ENCODE measurements at regions of chr19 and their contacts with region 1.

Region 1: DNA sequence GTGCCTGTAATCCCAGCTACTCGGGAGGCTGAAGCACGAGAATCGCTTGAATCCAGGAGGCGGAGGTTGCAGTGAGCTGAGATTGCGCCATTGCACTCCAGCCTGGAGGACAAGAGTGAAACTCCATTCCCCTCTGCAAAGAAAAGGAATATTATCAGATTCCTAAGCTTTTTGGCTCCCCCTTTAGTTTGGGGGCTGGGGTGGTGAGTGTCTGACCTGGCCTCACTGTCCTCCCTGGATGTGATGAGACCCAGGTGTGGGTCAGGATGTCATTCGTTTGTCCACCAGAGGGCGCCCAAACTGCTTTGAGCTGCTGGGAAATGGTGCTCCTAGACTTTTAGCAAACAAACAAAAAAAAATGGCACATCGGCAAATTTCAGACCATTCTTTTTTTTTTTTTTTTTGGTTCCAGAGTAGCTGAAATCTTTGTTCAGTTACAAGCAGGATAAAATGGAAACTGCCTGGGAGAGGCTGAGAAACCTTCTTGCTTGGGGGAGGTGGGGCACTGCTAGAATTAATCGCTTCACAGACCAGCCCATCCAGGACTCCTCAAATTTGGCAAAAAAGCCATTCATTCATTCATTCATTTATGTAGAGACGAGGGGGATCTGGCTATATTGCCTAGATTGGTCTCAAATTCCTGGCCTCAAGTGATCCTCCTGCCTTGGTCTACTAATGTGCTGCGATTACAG is 29.4 kb downstream of the SPC24 start:
- DNase-seq: peak; percentile 86
- ATAC-seq: peak; percentile 63
- H3K4me3 Mint-ChIP-seq: no peak overlapping the region
- H3K27ac Mint-ChIP-seq: no peak overlapping the region
- H3K4me1 Mint-ChIP-seq: peaks cover 2% of the 10 kb centered on the region
- H3K27me3 Mint-ChIP-seq: no peaks in the 10 kb centered on the region
- CTCF ChIP-seq: peak; percentile 87

Region 2: DNA sequence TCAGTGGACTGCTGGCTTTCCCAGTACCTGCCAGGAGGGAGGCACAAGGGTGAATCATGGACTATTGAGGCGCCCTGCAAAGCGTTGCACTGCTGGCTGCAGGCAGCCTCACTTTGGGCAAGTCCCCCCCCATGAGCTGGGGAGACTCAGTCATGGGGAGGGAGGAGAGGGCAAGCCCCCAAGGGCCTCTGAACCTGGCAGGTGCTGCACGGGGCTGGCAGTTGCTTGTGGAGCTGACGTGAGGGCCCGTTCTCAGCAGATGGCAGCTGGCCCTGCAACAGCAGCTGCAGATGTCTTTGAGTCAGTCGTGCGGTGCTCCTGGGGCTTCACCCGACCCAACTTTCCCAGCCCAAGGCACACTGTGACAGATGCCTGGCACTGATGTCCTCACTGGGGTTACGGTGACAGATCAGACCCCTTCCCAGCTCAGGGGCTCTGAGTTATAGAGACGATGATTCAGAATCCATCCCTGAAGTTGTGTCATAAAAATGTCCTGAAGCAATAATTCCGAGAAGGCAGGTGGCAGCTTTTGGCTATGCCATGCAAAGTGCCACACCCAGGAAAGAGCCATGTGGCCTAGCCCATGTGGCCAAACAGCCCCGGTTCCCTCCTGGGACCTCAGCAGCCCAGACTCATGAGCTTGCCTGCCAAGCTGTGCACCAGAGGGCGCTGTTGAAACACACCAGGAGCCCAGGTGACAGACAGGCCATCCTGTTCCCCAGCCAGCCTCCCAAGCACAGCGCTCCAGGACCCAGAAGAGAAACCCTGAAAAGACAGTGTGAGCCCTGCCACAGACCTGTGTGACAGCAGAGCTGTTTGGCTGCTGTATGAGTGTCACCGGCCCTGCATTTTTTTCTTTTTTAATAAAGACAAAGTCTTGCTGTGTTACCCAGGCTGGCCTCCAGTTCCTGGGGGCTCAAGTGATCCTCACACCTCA is 90.4 kb before region 1 on chr19:
- CTCF ChIA-PET with region 1: interaction called, 14 read pairs
- POLR2A ChIA-PET with region 1: no interaction called
- intact Hi-C with region 1: no loop called
- DNase-seq: peak; percentile 92
- ATAC-seq: peak; percentile 97
- H3K4me3 Mint-ChIP-seq: no peak overlapping the region
- H3K27ac Mint-ChIP-seq: peak overlapping the region; percentile 10
- H3K4me1 Mint-ChIP-seq: peaks cover 5% of the 10 kb centered on the region
- H3K27me3 Mint-ChIP-seq: no peaks in the 10 kb centered on the region
- CTCF ChIP-seq: peak; percentile 85

Region 3: DNA sequence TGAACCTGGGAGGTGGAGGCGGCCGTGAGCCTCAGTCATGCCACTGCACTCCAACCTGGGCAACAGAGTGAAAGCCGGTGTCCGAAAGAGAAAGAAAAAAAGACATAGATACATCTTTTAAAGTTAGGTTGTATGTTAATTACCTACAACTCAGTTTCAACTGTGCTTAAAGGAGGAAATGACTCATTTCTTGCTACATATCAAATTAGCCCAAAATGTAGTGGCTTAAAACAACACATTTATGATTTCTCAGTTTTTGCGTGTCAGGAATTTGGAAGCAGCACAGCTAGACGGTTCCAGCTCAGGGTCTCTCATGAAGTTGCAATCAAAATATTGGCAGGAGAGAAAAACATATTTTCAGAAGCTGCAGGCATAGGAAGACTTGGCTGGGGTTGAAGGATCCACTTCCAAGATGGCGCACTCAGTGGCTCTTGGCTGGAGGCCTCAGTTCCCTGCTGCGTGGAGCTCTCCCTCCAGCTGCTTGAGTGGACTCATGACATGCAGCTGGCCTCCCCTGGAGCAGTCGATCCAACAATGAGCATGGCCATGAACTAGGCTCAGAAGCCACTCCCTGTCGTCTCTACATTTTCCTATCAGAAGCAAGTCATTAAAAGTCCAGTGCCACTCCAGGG is 29.8 kb before region 1 on chr19:
- CTCF ChIA-PET with region 1: interaction called, 10 read pairs
- POLR2A ChIA-PET with region 1: interaction called, 4 read pairs
- intact Hi-C with region 1: no loop called
- DNase-seq: peak; percentile 57
- ATAC-seq: peak; percentile 55
- H3K4me3 Mint-ChIP-seq: peak overlapping the region; percentile 63
- H3K27ac Mint-ChIP-seq: peak overlapping the region; percentile 94
- H3K4me1 Mint-ChIP-seq: peaks cover 54% of the 10 kb centered on the region
- H3K27me3 Mint-ChIP-seq: no peaks in the 10 kb centered on the region
- CTCF ChIP-seq: no peak

Region 4: DNA sequence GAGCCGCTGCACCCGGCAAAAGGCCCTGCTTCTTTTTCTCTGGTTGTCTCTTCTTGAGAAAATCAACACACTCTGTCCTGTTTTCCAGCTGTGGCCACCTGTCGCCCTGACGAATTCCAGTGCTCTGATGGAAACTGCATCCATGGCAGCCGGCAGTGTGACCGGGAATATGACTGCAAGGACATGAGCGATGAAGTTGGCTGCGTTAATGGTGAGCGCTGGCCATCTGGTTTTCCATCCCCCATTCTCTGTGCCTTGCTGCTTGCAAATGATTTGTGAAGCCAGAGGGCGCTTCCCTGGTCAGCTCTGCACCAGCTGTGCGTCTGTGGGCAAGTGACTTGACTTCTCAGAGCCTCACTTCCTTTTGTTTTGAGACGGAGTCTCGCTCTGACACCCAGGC is 19.7 kb before region 1 on chr19:
- CTCF ChIA-PET with region 1: interaction called, 12 read pairs
- POLR2A ChIA-PET with region 1: interaction called, 5 read pairs
- intact Hi-C with region 1: no loop called
- DNase-seq: no peak
- ATAC-seq: no peak
- H3K4me3 Mint-ChIP-seq: no peak overlapping the region
- H3K27ac Mint-ChIP-seq: no peak overlapping the region
- H3K4me1 Mint-ChIP-seq: no peaks in the 10 kb centered on the region
- H3K27me3 Mint-ChIP-seq: no peaks in the 10 kb centered on the region
- CTCF ChIP-seq: no peak

Region 5: GRCh38 chr19:11137542-11138384 is 11.6 kb after region 1 on chr19:
- CTCF ChIA-PET with region 1: interaction called, 11 read pairs
- POLR2A ChIA-PET with region 1: interaction called, 3 read pairs
- intact Hi-C with region 1: no loop called
- DNase-seq: peak; percentile 64
- ATAC-seq: peak; percentile 76
- H3K4me3 Mint-ChIP-seq: peak overlapping the region; percentile 63
- H3K27ac Mint-ChIP-seq: no peak overlapping the region
- H3K4me1 Mint-ChIP-seq: peaks cover 8% of the 10 kb centered on the region
- H3K27me3 Mint-ChIP-seq: no peaks in the 10 kb centered on the region
- CTCF ChIP-seq: peak; percentile 88

Region 6: DNA sequence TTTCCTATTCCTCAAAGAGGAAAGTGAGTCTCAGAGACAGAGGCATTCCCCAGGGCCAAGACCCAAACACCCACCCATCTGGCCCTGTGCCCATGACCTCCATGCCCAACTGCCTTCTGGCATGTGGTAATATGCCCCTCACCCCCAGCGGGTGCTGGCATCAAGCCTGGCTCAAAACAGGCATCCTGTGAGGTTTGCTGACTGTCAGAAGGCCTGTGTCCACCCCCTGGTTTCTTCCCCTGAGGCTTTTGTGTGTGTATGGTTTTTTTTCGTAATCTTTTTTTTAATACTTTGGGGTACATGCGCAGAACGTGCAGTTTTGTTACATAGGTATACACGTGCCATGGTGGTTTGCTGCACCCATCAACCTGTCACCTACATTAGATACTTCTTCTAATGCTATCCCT is 78.8 kb after region 1 on chr19:
- CTCF ChIA-PET with region 1: no interaction called
- POLR2A ChIA-PET with region 1: no interaction called
- intact Hi-C with region 1: no loop called
- DNase-seq: no peak
- ATAC-seq: no peak
- H3K4me3 Mint-ChIP-seq: no peak overlapping the region
- H3K27ac Mint-ChIP-seq: no peak overlapping the region
- H3K4me1 Mint-ChIP-seq: no peaks in the 10 kb centered on the region
- H3K27me3 Mint-ChIP-seq: no peaks in the 10 kb centered on the region
- CTCF ChIP-seq: no peak